ENCODE measurements at regions of chr4 and their contacts with region 1.

Region 1: GRCh38 chr4:145936142-145936996 is 2.3 kb downstream of the ZNF827 start:
- DNase-seq: peak; percentile 44 to 87 (median 64)
- ATAC-seq: peak; percentile 51
- H3K4me3 ChIP-seq: peak overlapping the region; percentile 88
- H3K4me3 Mint-ChIP-seq: peak overlapping the region; percentile 98
- H3K27ac ChIP-seq: peak overlapping the region; percentile 13 to 62
- H3K27ac Mint-ChIP-seq: peak overlapping the region; percentile 90
- H3K4me1 ChIP-seq: peaks cover 16% of the 10 kb centered on the region
- H3K4me1 Mint-ChIP-seq: peaks cover 51% of the 10 kb centered on the region
- H3K27me3 ChIP-seq: no peaks in the 10 kb centered on the region
- H3K27me3 Mint-ChIP-seq: peaks cover 5% of the 10 kb centered on the region
- CTCF ChIP-seq: peak; percentile 46

Region 2: DNA sequence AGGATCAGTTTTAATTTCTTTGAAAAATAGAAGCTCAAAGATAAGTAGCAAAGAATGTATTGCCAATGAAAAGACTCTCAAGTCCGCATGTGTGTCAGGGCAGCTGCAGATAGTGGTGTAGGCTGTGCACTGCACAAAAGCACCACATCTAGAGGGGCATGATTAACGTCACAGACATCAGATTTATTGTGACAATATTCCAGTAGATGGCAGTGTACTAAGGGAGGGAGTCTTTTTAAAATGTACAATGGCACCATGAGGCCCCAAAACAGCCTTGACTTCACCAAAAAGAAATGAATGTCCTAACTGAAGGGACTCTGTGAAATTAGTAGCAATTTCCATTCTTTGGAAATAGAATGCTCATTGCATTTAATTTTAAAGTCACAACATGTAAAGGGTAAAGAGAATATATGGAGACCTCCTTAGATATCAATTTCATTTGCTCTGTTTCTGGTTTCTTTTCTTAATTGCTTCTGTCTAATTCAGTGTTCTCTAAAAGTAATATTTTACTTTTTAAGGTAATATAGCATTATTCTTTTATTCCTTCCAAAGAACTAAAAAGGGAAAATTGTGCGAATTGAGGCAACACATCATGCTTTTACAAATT is 96.1 kb before region 1 on chr4:
- CTCF ChIA-PET with region 1: no interaction called
- POLR2A ChIA-PET with region 1: interaction called, 3 read pairs
- intact Hi-C with region 1: loop called in 1 of 2 experiments (anchors 5 kb)
- DNase-seq: peak in 3 of 14 experiments; percentile 44 to 51 (median 46)
- ATAC-seq: peak; percentile 71
- H3K4me3 ChIP-seq: no peak overlapping the region
- H3K4me3 Mint-ChIP-seq: no peak overlapping the region
- H3K27ac ChIP-seq: no peak overlapping the region
- H3K27ac Mint-ChIP-seq: no peak overlapping the region
- H3K4me1 ChIP-seq: peaks cover 7% of the 10 kb centered on the region
- H3K4me1 Mint-ChIP-seq: peaks cover 23% of the 10 kb centered on the region
- H3K27me3 ChIP-seq: no peaks in the 10 kb centered on the region
- H3K27me3 Mint-ChIP-seq: no peaks in the 10 kb centered on the region
- CTCF ChIP-seq: peak; percentile 44

Region 3: DNA sequence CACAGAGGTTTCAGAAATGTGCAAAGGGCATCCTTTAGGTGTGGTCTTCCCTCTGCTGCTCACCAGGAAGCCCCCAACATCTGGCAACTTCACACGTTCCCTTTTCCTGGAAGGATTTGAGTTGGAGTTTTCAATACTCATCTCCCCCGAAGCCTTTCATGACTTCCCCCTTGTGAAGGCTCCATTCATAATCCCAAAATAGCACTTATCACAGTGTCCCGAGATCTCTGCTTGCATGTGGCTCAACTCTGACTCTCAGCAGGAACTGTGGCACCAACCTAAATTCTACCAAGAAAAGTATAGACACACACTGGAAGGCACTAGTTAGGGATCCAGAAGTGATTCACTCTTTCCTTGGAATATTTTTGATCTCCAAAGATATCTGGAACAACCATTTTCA is 42.8 kb after region 1 on chr4:
- CTCF ChIA-PET with region 1: no interaction called
- POLR2A ChIA-PET with region 1: no interaction called
- intact Hi-C with region 1: no loop called
- DNase-seq: no peak
- ATAC-seq: no peak
- H3K4me3 ChIP-seq: no peak overlapping the region
- H3K4me3 Mint-ChIP-seq: no peak overlapping the region
- H3K27ac ChIP-seq: no peak overlapping the region
- H3K27ac Mint-ChIP-seq: no peak overlapping the region
- H3K4me1 ChIP-seq: no peaks in the 10 kb centered on the region
- H3K4me1 Mint-ChIP-seq: no peaks in the 10 kb centered on the region
- H3K27me3 ChIP-seq: no peaks in the 10 kb centered on the region
- H3K27me3 Mint-ChIP-seq: no peaks in the 10 kb centered on the region
- CTCF ChIP-seq: no peak

Measured in CD4-positive, alpha-beta T cell (primary cell).